Activated naive CD4-positive, alpha-beta T cell treated with anti-CD3 and anti-CD28 coated beads for 36 hours (primary cell): ENCODE measurements at regions of chr9 and their contacts with region 1.

Region 1: DNA sequence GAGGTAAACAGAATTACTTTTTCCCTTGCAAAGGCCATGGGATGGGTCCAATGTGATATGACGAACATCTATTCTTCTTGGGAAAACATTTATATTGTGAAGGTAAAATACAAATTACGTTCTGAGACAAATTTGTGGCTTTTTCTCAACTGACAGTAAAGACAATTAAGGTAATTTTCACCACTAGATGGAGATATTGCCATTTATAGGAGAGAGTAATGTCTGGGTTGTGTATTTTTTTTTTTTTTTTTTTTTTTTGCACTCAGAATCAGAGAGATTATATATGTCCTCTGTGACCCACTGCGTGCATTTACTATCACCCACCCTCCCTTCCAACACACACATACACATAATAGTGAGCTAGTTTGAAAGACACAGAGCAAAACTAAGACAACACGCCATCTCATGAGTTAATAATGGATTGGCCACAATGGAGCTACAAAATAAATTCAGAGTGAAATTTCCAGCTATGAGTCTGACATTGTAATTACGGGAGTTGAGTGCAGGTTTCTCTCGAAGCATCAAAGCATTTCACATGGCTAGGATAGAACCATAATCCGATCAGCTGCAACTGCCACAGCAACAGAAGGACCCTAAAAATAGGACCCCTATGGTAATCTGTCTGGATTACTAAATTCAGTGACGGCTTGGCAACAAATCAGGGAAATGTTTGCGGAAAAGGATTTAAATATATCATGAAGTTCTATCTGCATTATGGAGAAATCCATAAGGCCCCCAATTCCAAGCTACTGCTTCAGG is 49.2 kb downstream of the ANXA1 start:
- DNase-seq: no peak
- H3K4me3 Mint-ChIP-seq: no peak overlapping the region
- H3K27ac Mint-ChIP-seq: no peak overlapping the region
- H3K4me1 Mint-ChIP-seq: no peaks in the 10 kb centered on the region
- H3K27me3 Mint-ChIP-seq: peaks cover 2% of the 10 kb centered on the region

Region 2: DNA sequence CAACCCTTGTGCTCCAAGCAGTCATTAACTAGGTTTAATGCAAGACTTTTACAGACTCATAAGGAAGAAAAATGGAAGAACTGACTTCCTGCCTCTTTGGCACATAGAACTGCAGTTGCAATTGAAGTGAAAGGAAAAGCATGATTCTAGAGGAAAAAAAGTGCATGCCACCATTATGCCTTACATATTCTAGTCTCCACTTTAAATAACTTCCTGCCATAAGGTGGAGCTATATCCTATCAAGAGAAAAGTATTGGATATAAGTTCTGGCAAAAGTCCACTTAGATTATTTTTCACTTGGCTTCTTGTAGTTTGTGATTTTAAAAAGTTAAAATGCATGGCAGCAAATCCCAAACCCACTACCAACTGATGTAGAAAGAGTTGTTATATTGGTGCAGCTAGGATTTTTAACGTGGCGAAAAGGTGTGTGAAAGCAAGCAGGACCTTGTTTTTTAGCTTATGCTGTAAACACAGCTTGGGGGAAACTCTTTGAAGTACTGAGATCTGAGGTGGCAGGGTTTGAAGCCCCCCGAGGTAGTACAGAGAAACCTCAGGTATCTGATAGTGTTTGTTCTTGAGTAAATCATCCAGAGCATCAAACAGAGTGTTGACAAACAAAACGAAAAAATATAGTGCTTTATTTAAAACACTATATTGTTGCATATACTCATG is 68.7 kb after region 1 on chr9:
- CTCF ChIA-PET with region 1: interaction called, 3 read pairs
- intact Hi-C with region 1: loop called (anchors 5 kb)
- DNase-seq: no peak
- H3K4me3 Mint-ChIP-seq: no peak overlapping the region
- H3K27ac Mint-ChIP-seq: no peak overlapping the region
- H3K4me1 Mint-ChIP-seq: no peaks in the 10 kb centered on the region
- H3K27me3 Mint-ChIP-seq: no peaks in the 10 kb centered on the region

Region 3: DNA sequence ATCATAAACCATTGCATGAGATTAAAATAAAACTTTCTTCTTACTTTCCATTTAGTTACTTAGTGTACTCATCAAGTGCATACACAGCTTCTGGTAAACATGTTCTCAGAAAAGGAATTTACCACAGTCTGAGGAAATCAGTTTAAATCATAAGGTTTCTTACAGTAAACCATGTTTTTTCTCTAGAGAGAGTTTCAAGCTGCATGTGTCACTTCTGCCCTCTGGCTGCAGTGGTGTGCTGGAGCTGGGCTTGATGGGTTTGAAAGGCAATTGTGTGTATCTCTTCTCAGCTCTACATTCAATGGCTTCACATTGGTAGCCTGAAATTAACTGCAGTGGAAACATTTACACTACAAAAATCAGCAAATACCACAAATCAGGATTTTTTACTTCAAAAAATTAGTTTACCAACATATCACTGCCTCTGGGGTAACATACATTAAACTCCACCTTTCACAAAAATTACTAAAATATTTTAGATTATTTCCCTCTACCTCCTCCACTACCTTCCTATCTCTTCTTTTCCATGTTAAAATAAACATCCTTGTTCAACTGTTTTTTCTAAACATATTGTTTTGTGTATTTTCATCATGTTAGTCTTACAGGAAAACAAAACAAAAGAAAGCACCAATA is 365.1 kb after region 1 on chr9:
- CTCF ChIA-PET with region 1: no interaction called
- intact Hi-C with region 1: loop called (anchors 2 kb)
- DNase-seq: peak; percentile 5
- H3K4me3 Mint-ChIP-seq: no peak overlapping the region
- H3K27ac Mint-ChIP-seq: no peak overlapping the region
- H3K4me1 Mint-ChIP-seq: no peaks in the 10 kb centered on the region
- H3K27me3 Mint-ChIP-seq: no peaks in the 10 kb centered on the region

Region 4: DNA sequence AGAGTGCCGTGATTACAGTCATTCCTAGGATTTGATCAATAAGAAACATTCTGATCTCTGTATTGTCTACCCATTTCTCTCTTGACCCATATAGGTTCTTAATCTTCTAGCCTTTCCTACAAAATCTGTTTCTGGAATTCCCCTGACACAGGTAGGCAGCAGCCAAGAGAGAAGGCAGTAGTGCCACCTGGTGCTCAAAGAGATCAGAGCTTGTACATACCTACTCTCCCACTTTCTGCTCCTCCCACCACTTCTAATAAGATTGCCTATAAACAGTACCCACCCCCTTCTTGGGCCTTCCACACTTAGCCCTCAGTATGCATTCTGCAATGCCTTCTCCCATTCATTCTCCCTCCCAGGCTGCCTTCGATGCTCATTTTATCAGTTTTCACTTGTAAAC is 1178.8 kb after region 1 on chr9:
- CTCF ChIA-PET with region 1: no interaction called
- intact Hi-C with region 1: loop called (anchors 2 kb)
- DNase-seq: peak; percentile 44
- H3K4me3 Mint-ChIP-seq: no peak overlapping the region
- H3K27ac Mint-ChIP-seq: no peak overlapping the region
- H3K4me1 Mint-ChIP-seq: no peaks in the 10 kb centered on the region
- H3K27me3 Mint-ChIP-seq: no peaks in the 10 kb centered on the region

Region 5: GRCh38 chr9:74570879-74571512 is 1370.1 kb after region 1 on chr9:
- CTCF ChIA-PET with region 1: interaction called, 3 read pairs
- intact Hi-C with region 1: loop called (anchors 1 kb)
- DNase-seq: peak; percentile 43
- H3K4me3 Mint-ChIP-seq: no peak overlapping the region
- H3K27ac Mint-ChIP-seq: no peak overlapping the region
- H3K4me1 Mint-ChIP-seq: no peaks in the 10 kb centered on the region
- H3K27me3 Mint-ChIP-seq: peaks cover 2% of the 10 kb centered on the region

Region 6: GRCh38 chr9:74645007-74645639 is 1444.2 kb after region 1 on chr9:
- CTCF ChIA-PET with region 1: no interaction called
- intact Hi-C with region 1: loop called (anchors 2 kb)
- DNase-seq: no peak
- H3K4me3 Mint-ChIP-seq: no peak overlapping the region
- H3K27ac Mint-ChIP-seq: no peak overlapping the region
- H3K4me1 Mint-ChIP-seq: no peaks in the 10 kb centered on the region
- H3K27me3 Mint-ChIP-seq: peaks cover 2% of the 10 kb centered on the region

Region 7: GRCh38 chr9:74742792-74743730 is 1542.2 kb after region 1 on chr9:
- CTCF ChIA-PET with region 1: no interaction called
- intact Hi-C with region 1: loop called (anchors 1 kb)
- DNase-seq: peak; percentile 31
- H3K4me3 Mint-ChIP-seq: no peak overlapping the region
- H3K27ac Mint-ChIP-seq: no peak overlapping the region
- H3K4me1 Mint-ChIP-seq: peaks cover 3% of the 10 kb centered on the region
- H3K27me3 Mint-ChIP-seq: peaks cover 34% of the 10 kb centered on the region